Spleen (tissue), 13 donors: ENCODE measurements at regions of chr3 and their contacts with region 1.

Region 1: GRCh38 chr3:187745201-187746058 is at the start of gene BCL6:
- DNase-seq: peak; percentile 96
- H3K4me3 ChIP-seq: peak within 1 kb of the TSS; percentile 52 to 84 (median 60)
- H3K27ac ChIP-seq: peak within 1 kb of the TSS; percentile 95 to 99 (median 99)
- H3K4me1 ChIP-seq: peaks cover 28 to 81% (median 61%) of the 10 kb centered on the region in 6 donors
- H3K27me3 ChIP-seq: no peaks in the 10 kb centered on the region
- CTCF ChIP-seq: peak in 7 of 11 experiments; percentile 15 to 40 (median 28)
- POLR2A ChIP-seq: peak; percentile 89 to 98 (median 97)
- total RNA-seq, gene BCL6: 84.4 to 444 (median 168) TPM

Region 2: DNA sequence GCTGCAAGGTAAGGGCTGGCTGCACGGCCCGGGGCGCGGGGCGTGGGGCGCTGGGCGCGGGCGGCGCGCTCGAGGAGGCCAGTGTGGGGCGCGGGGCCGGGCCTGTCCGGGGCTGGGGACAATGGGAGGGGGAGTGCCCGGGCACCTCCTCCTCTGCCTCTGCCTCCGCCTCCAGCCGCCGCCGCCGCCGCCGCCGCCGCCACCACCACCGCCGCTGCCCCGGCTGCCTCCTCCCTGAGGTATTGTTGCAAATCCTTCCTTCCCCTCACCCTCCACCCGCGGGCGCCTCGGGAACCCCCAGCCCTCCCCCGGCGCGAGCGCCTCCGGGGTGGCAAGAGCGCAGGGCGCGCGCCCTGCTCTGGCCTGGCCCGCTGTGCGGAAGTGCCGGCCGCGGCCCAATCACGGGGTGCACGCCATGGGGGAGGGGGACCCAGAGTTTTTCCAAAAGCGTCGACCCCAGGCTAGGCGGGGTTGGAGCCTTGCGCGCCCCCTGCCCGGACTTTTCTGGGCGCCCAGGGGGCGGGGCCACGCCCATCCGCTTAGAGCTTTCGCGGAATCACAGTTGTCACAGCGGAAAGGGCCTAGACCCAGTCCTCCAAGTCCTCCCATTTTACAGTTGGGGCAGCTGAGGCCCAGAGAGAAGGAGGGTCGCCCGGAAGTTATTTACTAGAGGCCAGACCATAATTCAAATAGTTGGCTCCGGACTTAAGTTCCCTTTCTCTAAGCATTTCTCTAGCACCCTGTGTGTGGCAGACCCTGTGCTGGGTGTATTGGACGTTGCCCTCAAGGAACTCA is 408.8 kb after region 1 on chr3 and contains the start of gene LPP:
- intact Hi-C with region 1: loop called (anchors 10 kb)
- DNase-seq: peak; percentile 98
- H3K4me3 ChIP-seq: peak within 1 kb of the TSS; percentile 74 to 96 (median 83)
- H3K27ac ChIP-seq: peak within 1 kb of the TSS; percentile 85 to 98 (median 94)
- H3K4me1 ChIP-seq: peaks cover 20 to 67% (median 49%) of the 10 kb centered on the region in 6 donors
- H3K27me3 ChIP-seq: no peaks in the 10 kb centered on the region
- CTCF ChIP-seq: peak in 4 of 11 experiments; percentile 18 to 42 (median 24)
- POLR2A ChIP-seq: peak in 1 of 3 donors; percentile 3
- total RNA-seq, gene LPP: 109 to 270 (median 176) TPM

Region 3: DNA sequence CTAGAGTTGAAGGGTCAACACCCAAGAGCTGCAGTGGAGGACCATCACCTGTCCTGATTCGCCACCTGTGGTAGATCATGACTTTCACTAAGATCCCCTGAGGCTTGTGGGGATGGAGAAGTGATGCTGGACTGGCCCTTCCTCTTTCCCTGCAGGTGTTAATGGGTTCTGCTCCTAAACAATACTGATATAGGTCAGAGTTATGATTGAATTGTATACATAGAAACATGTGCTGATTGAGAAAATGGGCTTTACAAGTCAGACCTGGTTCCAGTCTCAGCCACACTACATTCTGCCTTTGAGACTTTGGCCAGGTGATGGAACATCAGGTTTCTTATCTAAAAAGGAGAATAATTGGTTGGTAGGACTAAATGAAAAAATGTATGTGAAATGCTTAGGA is 1007.4 kb after region 1 on chr3:
- intact Hi-C with region 1: loop called (anchors 10 kb)
- DNase-seq: no peak
- H3K4me3 ChIP-seq: no peak overlapping the region
- H3K27ac ChIP-seq: no peak overlapping the region
- H3K4me1 ChIP-seq: peaks cover 0 to 42% (median 6%) of the 10 kb centered on the region in 6 donors
- H3K27me3 ChIP-seq: no peaks in the 10 kb centered on the region
- CTCF ChIP-seq: no peak
- POLR2A ChIP-seq: no peak

Region 4: DNA sequence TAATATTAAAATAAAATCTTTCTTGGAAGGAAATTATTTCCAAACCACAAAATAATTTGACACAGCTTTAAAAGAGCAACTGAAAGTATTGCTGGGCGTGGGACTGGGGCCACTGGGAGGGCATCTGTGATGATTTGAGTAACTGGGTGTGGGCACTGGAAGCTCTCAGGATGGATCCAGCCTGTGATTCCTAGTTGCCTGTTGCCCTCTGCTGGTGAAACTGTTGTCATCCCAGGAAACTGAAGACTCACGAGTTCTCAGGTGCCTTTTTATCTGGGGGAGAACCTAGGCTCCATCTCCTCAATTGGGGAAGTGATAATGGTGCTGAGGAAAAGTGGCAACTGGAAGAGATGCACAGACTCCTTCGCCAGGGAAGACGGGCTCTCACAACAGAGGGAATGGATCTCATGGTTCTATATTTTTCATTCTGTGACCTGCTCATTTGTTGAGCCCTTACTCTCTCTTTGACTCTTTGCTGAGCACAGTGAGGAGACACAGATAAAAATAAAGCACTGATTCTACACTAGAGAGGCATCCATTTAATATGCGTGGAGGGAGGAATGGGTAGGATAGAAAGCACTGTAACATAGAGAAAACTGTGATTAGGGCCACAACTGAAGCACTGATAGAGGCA is 1487.9 kb after region 1 on chr3:
- intact Hi-C with region 1: loop called (anchors 10 kb)
- DNase-seq: no peak
- H3K4me3 ChIP-seq: no peak overlapping the region
- H3K27ac ChIP-seq: no peak overlapping the region
- H3K4me1 ChIP-seq: peaks cover 0 to 3% (median 0%) of the 10 kb centered on the region in 6 donors
- H3K27me3 ChIP-seq: no peaks in the 10 kb centered on the region
- CTCF ChIP-seq: peak in 8 of 11 experiments; percentile 23 to 51 (median 42)
- POLR2A ChIP-seq: no peak